Psoas muscle (tissue), 8 donors: ENCODE measurements at regions of chr16 and their contacts with region 1.

Region 1: GRCh38 chr16:82767808-82768207 is 141.0 kb downstream of the CDH13 start:
- DNase-seq: no peak
- ATAC-seq: peak in 2 of 4 donors; percentile 18 to 26
- H3K4me3 ChIP-seq: no peak overlapping the region
- H3K27ac ChIP-seq: peak overlapping the region; percentile 60
- H3K4me1 ChIP-seq: peaks cover 53% of the 10 kb centered on the region
- H3K27me3 ChIP-seq: no peaks in the 10 kb centered on the region
- CTCF ChIP-seq: no peak

Region 2: GRCh38 chr16:82329485-82330180 is 438.2 kb before region 1 on chr16:
- intact Hi-C with region 1: no loop called
- DNase-seq: no peak
- ATAC-seq: peak in 1 of 4 donors; percentile 46
- H3K4me3 ChIP-seq: no peak overlapping the region
- H3K27ac ChIP-seq: no peak overlapping the region
- H3K4me1 ChIP-seq: no peaks in the 10 kb centered on the region
- H3K27me3 ChIP-seq: no peaks in the 10 kb centered on the region
- CTCF ChIP-seq: no peak

Region 3: DNA sequence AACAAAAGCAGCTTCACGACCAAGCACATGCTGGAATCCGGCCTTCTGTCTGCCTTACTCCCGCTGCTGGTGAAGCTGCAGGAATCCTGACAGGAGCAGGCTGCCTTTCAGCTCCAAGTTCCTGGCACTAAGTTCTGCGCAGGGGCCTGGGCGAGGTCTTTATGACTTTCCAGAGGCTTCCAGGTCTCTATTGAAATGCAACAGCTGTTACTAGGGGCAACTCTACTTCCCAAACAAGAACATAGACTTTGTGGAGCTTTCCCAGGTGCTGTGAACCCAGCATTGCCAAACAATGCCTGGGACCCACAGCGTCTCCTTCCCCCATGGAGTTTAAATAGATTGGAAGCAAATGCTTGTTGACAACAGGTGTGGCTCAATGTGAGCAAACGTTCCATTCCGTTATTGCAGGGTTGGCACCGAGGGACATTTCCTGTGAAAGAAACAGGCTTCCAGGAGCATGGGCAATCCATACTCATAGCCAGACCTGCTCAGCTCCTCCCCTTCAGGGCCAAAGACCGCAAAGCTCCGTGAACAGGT is 15.0 kb after region 1 on chr16:
- intact Hi-C with region 1: loop called in 1 of 2 experiments (anchors 1 kb)
- DNase-seq: peak in 1 of 2 donors; percentile 19
- ATAC-seq: peak; percentile 86 to 88 (median 88)
- H3K4me3 ChIP-seq: peak overlapping the region; percentile 54
- H3K27ac ChIP-seq: peak overlapping the region; percentile 91
- H3K4me1 ChIP-seq: peaks cover 34% of the 10 kb centered on the region
- H3K27me3 ChIP-seq: no peaks in the 10 kb centered on the region
- CTCF ChIP-seq: no peak

Region 4: GRCh38 chr16:82888591-82889001 is 120.8 kb after region 1 on chr16:
- intact Hi-C with region 1: no loop called
- DNase-seq: no peak
- ATAC-seq: peak in 3 of 4 donors; percentile 27 to 68 (median 63)
- H3K4me3 ChIP-seq: peak overlapping the region; percentile 20
- H3K27ac ChIP-seq: no peak overlapping the region
- H3K4me1 ChIP-seq: peaks cover 34% of the 10 kb centered on the region
- H3K27me3 ChIP-seq: no peaks in the 10 kb centered on the region
- CTCF ChIP-seq: no peak